CD8-positive, alpha-beta T cell (primary cell): ENCODE measurements at regions of chr7 and their contacts with region 1.

Region 1: DNA sequence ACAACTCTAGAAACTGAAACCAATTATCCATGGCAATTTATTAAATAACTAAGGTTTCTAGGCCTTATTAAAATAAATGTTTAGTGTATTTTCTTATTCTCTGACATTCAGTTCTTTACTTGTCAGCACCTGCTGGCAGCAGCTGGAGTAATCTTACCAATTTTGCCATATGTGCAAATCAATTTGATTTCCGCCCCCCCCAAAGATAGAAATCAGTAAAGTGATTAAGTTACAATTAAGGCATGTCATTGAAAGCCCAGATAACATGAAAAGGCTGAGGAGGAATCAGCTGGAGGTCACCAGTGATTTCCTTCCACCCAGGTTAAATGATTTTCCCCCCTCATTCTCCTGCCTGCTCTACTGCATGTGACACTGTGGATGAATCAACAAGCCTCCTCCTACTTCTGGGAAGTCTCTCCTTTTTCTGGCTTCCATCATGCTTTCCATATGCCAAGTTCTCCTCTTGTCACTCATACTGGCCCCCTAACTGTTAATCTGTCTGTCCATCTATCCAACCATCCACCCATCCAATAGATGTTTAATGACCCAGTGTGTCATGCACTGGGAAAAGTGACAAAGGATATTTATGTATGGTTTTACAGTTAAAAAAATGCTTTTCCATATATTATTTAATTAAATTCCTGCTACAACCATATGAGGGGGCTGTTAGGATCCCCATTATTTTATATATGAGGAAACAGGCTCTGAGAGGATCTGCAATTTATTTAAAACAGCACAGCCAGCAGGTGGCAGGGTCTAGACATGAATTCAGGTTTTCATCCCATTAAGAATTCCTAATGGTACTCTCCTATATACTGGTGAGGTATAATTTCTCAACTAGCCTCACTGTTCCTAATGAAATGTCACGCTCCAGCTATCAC is 116.5 kb downstream of the ATXN7L1 start:
- DNase-seq: peak in 4 of 9 experiments; percentile 23 to 59 (median 39)
- ATAC-seq: peak; percentile 25
- H3K4me3 ChIP-seq: no peak overlapping the region
- H3K4me3 Mint-ChIP-seq: no peak overlapping the region
- H3K27ac ChIP-seq: no peak overlapping the region
- H3K27ac Mint-ChIP-seq: peak overlapping the region; percentile 70
- H3K4me1 ChIP-seq: peaks cover 30% of the 10 kb centered on the region
- H3K4me1 Mint-ChIP-seq: peaks cover 43% of the 10 kb centered on the region
- H3K27me3 ChIP-seq: no peaks in the 10 kb centered on the region
- H3K27me3 Mint-ChIP-seq: no peaks in the 10 kb centered on the region
- CTCF ChIP-seq: peak; percentile 30

Region 2: GRCh38 chr7:105652359-105652993 is 107.4 kb before region 1 on chr7:
- CTCF ChIA-PET with region 1: interaction called, 13 read pairs
- POLR2A ChIA-PET with region 1: no interaction called
- intact Hi-C with region 1: loop called (anchors 2 to 5 kb)
- DNase-seq: peak; percentile 34 to 73 (median 70)
- ATAC-seq: peak; percentile 92
- H3K4me3 ChIP-seq: no peak overlapping the region
- H3K4me3 Mint-ChIP-seq: no peak overlapping the region
- H3K27ac ChIP-seq: no peak overlapping the region
- H3K27ac Mint-ChIP-seq: no peak overlapping the region
- H3K4me1 ChIP-seq: no peaks in the 10 kb centered on the region
- H3K4me1 Mint-ChIP-seq: peaks cover 5% of the 10 kb centered on the region
- H3K27me3 ChIP-seq: no peaks in the 10 kb centered on the region
- H3K27me3 Mint-ChIP-seq: no peaks in the 10 kb centered on the region
- CTCF ChIP-seq: peak; percentile 70

Region 3: GRCh38 chr7:105808703-105809590 is 49.0 kb after region 1 on chr7:
- CTCF ChIA-PET with region 1: interaction called, 12 read pairs
- POLR2A ChIA-PET with region 1: no interaction called
- intact Hi-C with region 1: loop called in 1 of 2 experiments (anchors 5 kb)
- DNase-seq: peak; percentile 19 to 90 (median 71)
- ATAC-seq: peak; percentile 90
- H3K4me3 ChIP-seq: peak overlapping the region in 1 of 2 experiments; percentile 6
- H3K4me3 Mint-ChIP-seq: no peak overlapping the region
- H3K27ac ChIP-seq: peak overlapping the region; percentile 23 to 87
- H3K27ac Mint-ChIP-seq: peak overlapping the region; percentile 24
- H3K4me1 ChIP-seq: peaks cover 36% of the 10 kb centered on the region
- H3K4me1 Mint-ChIP-seq: peaks cover 58% of the 10 kb centered on the region
- H3K27me3 ChIP-seq: no peaks in the 10 kb centered on the region
- H3K27me3 Mint-ChIP-seq: no peaks in the 10 kb centered on the region
- CTCF ChIP-seq: no peak

Region 4: DNA sequence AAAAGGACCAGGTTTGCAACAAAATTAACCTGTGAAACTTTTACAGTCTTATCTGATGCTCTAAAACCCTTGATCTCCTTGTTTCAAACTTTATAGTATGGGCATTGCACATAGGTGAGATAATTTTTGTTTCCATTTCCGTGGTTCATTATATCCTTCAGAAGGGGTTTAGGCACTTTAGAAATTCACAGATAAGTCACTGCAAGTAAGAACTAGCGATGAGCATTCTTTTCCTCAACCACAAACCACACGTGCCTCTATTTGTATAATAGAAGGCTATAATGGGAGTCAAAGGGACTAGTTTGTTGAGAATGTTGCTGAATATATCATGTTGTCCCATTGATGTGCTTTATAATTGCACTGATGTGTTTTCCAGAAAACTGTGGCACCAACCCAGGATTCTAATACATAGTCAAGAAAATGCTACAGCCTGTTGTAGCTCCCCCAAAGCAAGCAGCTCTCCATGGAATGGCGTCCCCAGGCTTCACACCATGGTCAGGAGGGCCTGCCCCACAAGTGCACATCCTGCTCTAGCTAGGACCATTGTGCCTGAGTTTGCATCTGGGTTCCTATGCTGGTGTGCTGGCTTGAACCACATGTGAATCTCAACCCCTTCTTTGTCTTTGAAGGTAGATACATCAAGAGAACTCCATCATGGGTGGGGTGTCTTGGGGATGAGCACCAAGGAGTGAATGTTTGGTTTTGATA is 130.5 kb after region 1 on chr7:
- CTCF ChIA-PET with region 1: interaction called, 13 read pairs
- POLR2A ChIA-PET with region 1: no interaction called
- intact Hi-C with region 1: no loop called
- DNase-seq: peak in 1 of 9 experiments; percentile 30
- ATAC-seq: peak; percentile 31
- H3K4me3 ChIP-seq: no peak overlapping the region
- H3K4me3 Mint-ChIP-seq: no peak overlapping the region
- H3K27ac ChIP-seq: peak overlapping the region in 1 of 2 experiments; percentile 5
- H3K27ac Mint-ChIP-seq: peak overlapping the region; percentile 52
- H3K4me1 ChIP-seq: peaks cover 18% of the 10 kb centered on the region
- H3K4me1 Mint-ChIP-seq: peaks cover 40% of the 10 kb centered on the region
- H3K27me3 ChIP-seq: no peaks in the 10 kb centered on the region
- H3K27me3 Mint-ChIP-seq: no peaks in the 10 kb centered on the region
- CTCF ChIP-seq: no peak

Region 5: DNA sequence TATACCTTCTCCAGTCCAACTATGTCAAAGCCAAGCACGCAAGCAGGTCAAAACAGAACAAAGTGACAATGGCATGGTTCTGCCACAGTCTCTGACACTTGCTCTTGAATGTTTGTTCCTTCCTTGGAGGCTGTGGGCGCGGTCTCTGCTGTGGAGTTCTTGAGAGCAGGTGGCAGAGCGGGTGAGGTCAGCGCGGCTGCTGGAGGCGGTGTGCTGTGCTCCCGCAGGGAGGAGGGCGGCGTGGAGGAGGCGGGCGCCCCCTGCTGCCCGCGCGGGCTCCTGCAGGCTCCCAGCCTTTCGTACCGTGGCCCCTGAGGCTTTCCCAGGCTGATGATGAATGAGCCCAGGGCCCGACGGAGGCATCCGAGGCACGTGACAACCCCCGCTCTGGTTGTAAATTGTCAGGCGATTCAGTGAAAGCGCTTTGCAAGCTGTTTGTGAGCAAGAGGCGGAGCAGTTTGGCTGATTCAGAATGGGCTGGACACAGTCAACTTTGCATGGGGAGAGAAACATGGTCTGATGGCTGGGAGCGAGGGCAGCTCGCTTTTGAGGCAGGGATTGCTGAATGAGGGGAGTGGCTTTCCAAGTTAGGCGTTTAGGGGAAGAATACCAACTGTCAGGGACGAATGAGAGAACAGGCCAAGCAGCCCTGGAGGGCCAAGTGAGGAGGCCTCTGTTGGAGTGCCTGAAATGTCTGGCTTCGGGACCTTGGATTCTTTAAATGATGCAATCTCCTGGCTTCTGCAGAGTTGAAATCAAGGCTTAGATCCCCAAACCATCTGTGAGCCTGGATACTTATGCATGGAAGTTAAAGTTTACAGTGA is 249.7 kb after region 1 on chr7:
- CTCF ChIA-PET with region 1: interaction called, 69 read pairs
- POLR2A ChIA-PET with region 1: interaction called, 3 read pairs
- intact Hi-C with region 1: loop called (anchors 1 to 5 kb)
- DNase-seq: peak; percentile 61 to 89 (median 87)
- ATAC-seq: peak; percentile 98
- H3K4me3 ChIP-seq: no peak overlapping the region
- H3K4me3 Mint-ChIP-seq: peak overlapping the region; percentile 16
- H3K27ac ChIP-seq: no peak overlapping the region
- H3K27ac Mint-ChIP-seq: peak overlapping the region; percentile 18
- H3K4me1 ChIP-seq: peaks cover 32% of the 10 kb centered on the region
- H3K4me1 Mint-ChIP-seq: peaks cover 36% of the 10 kb centered on the region
- H3K27me3 ChIP-seq: no peaks in the 10 kb centered on the region
- H3K27me3 Mint-ChIP-seq: no peaks in the 10 kb centered on the region
- CTCF ChIP-seq: peak; percentile 91

Region 6: GRCh38 chr7:106056513-106057203 is 296.7 kb after region 1 on chr7:
- CTCF ChIA-PET with region 1: interaction called, 11 read pairs
- POLR2A ChIA-PET with region 1: no interaction called
- intact Hi-C with region 1: no loop called
- DNase-seq: peak; percentile 32 to 84 (median 71)
- ATAC-seq: peak; percentile 99
- H3K4me3 ChIP-seq: no peak overlapping the region
- H3K4me3 Mint-ChIP-seq: no peak overlapping the region
- H3K27ac ChIP-seq: no peak overlapping the region
- H3K27ac Mint-ChIP-seq: no peak overlapping the region
- H3K4me1 ChIP-seq: peaks cover 19% of the 10 kb centered on the region
- H3K4me1 Mint-ChIP-seq: peaks cover 26% of the 10 kb centered on the region
- H3K27me3 ChIP-seq: no peaks in the 10 kb centered on the region
- H3K27me3 Mint-ChIP-seq: no peaks in the 10 kb centered on the region
- CTCF ChIP-seq: peak; percentile 79

Region 7: GRCh38 chr7:106205621-106206222 is 445.8 kb after region 1 on chr7:
- CTCF ChIA-PET with region 1: no interaction called
- POLR2A ChIA-PET with region 1: no interaction called
- intact Hi-C with region 1: no loop called
- DNase-seq: no peak
- ATAC-seq: no peak
- H3K4me3 ChIP-seq: no peak overlapping the region
- H3K4me3 Mint-ChIP-seq: no peak overlapping the region
- H3K27ac ChIP-seq: no peak overlapping the region
- H3K27ac Mint-ChIP-seq: no peak overlapping the region
- H3K4me1 ChIP-seq: no peaks in the 10 kb centered on the region
- H3K4me1 Mint-ChIP-seq: no peaks in the 10 kb centered on the region
- H3K27me3 ChIP-seq: no peaks in the 10 kb centered on the region
- H3K27me3 Mint-ChIP-seq: peaks cover 14% of the 10 kb centered on the region
- CTCF ChIP-seq: no peak